ENCODE measurements at regions of chr3 and their contacts with region 1.

Region 1: DNA sequence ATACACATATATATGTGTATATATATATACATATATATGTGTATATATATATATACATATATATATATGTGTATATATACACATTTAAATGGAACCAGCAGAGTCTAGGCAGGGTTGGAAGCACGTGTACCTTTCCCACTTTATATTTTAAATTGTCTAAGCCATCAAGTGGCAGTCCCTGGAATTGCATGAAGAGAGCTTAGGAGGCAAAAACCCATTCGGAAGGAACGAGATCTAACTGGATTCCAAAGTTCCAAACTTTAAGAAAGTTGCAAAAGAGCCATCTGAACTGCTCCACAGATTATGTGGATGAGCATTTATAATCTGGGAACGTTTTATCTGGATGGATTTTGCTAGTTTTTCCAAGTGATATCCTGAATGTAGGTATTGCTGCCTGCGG is 186.5 kb downstream of the FOXP1 start:
- DNase-seq: no peak
- ATAC-seq: no peak
- H3K4me3 Mint-ChIP-seq: peak overlapping the region; percentile 36
- H3K27ac Mint-ChIP-seq: peak overlapping the region; percentile 72
- H3K4me1 Mint-ChIP-seq: peaks cover 85% of the 10 kb centered on the region
- H3K27me3 Mint-ChIP-seq: no peaks in the 10 kb centered on the region
- CTCF ChIP-seq: no peak

Region 2: DNA sequence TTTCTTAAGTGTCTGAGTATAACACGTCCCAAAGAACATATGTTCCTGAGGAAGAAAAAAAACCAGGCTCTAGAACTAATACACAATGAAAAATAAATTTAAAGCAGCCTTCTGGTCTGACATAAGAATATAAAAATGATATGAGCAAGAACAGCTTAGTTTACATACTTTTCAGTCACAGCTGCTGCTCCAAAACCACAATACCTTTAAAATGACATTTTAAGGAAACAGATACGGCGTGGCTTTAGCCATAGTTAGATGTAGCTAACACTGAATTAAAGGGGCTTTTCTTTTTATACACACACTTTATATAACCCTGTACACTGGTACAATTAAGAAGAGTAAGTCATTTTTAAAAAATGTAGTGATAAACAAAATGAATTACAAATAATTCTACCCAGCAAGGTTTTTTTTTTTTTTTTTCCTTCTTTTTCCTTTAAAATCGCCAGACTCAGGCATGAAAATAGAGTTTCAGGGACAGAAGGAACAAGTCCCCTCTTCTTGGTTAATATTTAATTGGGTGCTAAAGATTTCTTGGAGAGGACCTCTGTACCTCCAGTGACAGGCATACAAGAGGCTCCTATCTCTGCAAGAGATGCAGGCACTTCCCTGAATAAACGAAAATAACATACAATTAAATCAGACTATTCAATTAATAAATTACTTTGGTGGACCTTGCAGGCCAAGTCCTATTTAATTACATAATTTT is 79.1 kb before region 1 on chr3:
- CTCF ChIA-PET with region 1: no interaction called
- POLR2A ChIA-PET with region 1: no interaction called
- intact Hi-C with region 1: no loop called
- DNase-seq: no peak
- ATAC-seq: no peak
- H3K4me3 Mint-ChIP-seq: peak overlapping the region; percentile 26
- H3K27ac Mint-ChIP-seq: peak overlapping the region; percentile 73
- H3K4me1 Mint-ChIP-seq: peaks cover 47% of the 10 kb centered on the region
- H3K27me3 Mint-ChIP-seq: no peaks in the 10 kb centered on the region
- CTCF ChIP-seq: no peak

Region 3: DNA sequence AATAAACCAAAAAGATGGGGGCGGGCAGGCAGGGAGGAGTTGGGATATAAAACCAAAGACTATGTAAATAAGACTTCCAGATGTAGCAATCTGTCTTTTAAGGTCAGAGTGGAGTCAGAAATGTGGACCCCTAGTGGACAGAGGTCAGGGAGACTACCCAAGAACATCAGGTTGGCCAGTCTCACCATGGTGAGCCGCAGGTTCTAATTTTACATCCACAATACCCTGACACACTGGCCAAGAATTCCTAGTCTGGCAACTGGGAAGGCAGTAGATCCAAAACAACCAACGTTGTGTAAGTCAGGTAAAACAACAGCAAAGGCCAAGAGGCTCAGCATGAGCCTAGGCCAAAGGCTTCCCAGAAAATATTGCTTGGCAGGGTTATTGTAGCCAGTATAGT is 16.9 kb before region 1 on chr3:
- CTCF ChIA-PET with region 1: interaction called, 6 read pairs
- POLR2A ChIA-PET with region 1: interaction called, 11 read pairs
- intact Hi-C with region 1: no loop called
- DNase-seq: no peak
- ATAC-seq: no peak
- H3K4me3 Mint-ChIP-seq: no peak overlapping the region
- H3K27ac Mint-ChIP-seq: peak overlapping the region; percentile 24
- H3K4me1 Mint-ChIP-seq: peaks cover 80% of the 10 kb centered on the region
- H3K27me3 Mint-ChIP-seq: no peaks in the 10 kb centered on the region
- CTCF ChIP-seq: no peak

Region 4: DNA sequence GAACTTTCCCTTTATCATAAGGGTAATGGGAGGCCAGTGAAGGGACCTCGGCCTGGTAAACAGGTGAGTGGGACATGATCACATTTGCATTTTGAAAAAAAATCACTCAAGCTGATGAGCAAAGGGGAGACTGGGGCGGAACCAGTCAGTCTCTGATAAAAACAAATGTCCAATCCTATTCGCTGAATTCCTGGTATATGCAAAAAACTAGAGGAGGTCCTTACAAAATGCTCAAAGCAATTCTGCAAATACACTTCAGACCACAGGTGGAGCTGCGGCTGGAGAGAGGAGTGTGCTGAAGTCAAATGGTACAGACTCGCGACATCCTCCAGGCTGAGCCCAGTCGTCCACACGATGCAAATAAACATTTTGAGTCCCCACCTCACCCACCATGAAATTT is 19.8 kb after region 1 on chr3:
- CTCF ChIA-PET with region 1: interaction called, 17 read pairs
- POLR2A ChIA-PET with region 1: interaction called, 8 read pairs
- intact Hi-C with region 1: loop called (anchors 1 kb)
- DNase-seq: no peak
- ATAC-seq: peak; percentile 54
- H3K4me3 Mint-ChIP-seq: peak overlapping the region; percentile 42
- H3K27ac Mint-ChIP-seq: peak overlapping the region; percentile 81
- H3K4me1 Mint-ChIP-seq: peaks cover 82% of the 10 kb centered on the region
- H3K27me3 Mint-ChIP-seq: no peaks in the 10 kb centered on the region
- CTCF ChIP-seq: no peak

Region 5: GRCh38 chr3:71428841-71429596 is 32.0 kb after region 1 on chr3:
- CTCF ChIA-PET with region 1: interaction called, 3 read pairs
- POLR2A ChIA-PET with region 1: interaction called, 13 read pairs
- intact Hi-C with region 1: no loop called
- DNase-seq: no peak
- ATAC-seq: peak; percentile 40
- H3K4me3 Mint-ChIP-seq: no peak overlapping the region
- H3K27ac Mint-ChIP-seq: peak overlapping the region; percentile 64
- H3K4me1 Mint-ChIP-seq: peaks cover 94% of the 10 kb centered on the region
- H3K27me3 Mint-ChIP-seq: no peaks in the 10 kb centered on the region
- CTCF ChIP-seq: no peak

Region 6: DNA sequence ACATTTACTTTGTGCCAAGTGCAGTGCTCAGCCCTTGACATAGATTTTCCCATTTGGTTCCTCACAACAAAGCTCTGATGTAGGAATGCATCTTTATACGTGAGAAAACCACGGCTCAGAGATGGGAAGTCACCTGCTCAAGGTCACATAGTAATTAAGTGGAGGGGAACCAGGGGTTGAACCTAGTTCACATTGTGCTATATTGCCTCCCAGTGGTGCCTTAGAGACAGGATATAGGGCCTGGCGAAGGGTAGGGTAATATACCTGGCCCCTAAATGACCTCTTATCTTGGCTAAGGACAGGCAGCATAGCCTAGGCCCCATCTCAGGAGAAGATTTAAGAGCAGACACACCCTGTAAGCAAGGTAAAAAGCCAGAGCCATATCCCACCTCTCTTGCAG is 115.0 kb after region 1 on chr3:
- CTCF ChIA-PET with region 1: interaction called, 8 read pairs
- POLR2A ChIA-PET with region 1: interaction called, 10 read pairs
- intact Hi-C with region 1: loop called (anchors 2 kb)
- DNase-seq: no peak
- ATAC-seq: peak; percentile 97
- H3K4me3 Mint-ChIP-seq: peak overlapping the region; percentile 5
- H3K27ac Mint-ChIP-seq: no peak overlapping the region
- H3K4me1 Mint-ChIP-seq: peaks cover 22% of the 10 kb centered on the region
- H3K27me3 Mint-ChIP-seq: no peaks in the 10 kb centered on the region
- CTCF ChIP-seq: no peak